GM13977 (cell line): ENCODE measurements at regions of chr18 and their contacts with region 1.

Region 1: DNA sequence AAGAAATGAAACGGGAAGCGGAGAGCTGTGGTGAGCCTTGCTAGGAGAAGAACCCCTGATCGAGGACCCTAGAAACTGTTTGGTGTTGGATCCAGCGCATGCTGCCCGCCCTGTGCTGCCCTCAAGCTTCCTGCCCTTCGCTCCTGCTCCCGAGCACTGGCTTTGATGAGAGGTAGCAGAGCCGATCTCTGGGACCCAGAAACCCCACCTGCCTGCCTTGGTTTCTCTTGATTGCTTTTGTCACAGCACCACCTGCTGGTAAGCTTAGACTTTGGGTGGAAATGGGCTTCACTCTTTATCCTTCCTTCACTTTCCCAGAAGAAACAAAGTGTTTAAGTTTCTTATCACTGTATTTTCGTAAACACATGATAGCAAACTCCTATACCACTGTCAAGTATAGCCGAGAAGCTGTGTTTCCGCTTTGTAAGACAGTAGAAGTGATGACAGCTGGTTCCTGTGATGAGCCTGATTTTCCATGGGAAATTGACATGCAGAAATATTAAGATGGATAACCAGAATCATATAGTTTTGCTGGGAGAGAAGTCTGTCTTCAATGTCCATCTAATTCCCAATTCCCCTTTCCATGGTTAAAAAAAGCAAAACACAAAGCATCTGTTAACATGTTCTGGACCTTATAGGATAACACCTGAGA is 267.4 kb downstream of the PHLPP1 start:
- DNase-seq: peak; percentile 82
- CTCF ChIP-seq: peak; percentile 82

Region 2: GRCh38 chr18:62610701-62611411 is 371.9 kb before region 1 on chr18:
- in situ Hi-C with region 1: loop called (anchors 25 kb)
- DNase-seq: no peak
- CTCF ChIP-seq: no peak

Region 3: GRCh38 chr18:62852851-62853250 is 129.9 kb before region 1 on chr18:
- in situ Hi-C with region 1: no loop called
- DNase-seq: no peak
- CTCF ChIP-seq: no peak